SK-N-SH (cell line): ENCODE measurements at regions of chr19 and their contacts with region 1.

Region 1: DNA sequence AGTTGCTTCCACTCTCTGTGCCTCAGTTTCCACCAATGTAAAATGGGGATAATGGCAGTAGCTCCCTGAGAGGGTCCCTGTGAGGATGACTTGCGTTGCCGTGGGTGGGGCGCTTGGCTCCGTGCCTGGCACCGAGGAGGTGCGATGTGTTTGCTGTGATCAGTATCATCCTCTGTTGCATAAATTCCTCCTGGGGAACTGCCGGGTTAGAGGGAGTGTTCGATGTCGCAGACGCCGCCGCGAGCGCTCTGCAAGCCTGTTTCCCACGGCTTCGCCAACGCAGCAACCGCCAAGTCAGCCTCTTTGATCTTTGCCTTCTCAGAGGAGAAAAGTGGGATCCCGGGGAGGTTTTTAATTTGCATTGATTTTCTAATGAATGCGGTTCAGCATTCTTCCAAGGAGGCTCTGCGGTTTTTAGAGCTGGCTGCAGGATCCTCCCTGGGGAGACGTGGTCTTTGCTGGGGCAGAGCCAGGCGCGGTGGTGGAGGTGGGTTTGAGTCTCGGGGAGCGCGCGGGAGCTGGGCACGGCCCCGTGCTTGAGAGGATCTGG is 7.6 kb downstream of the GPR32 start:
- DNase-seq: peak; percentile 54
- H3K4me3 ChIP-seq: no peak overlapping the region
- H3K27ac ChIP-seq: no peak overlapping the region
- H3K4me1 ChIP-seq: no peaks in the 10 kb centered on the region
- H3K27me3 ChIP-seq: peaks cover 60% of the 10 kb centered on the region
- CTCF ChIP-seq: no peak
- EP300 ChIP-seq: no peak
- RAD21 ChIP-seq: no peak

Region 2: GRCh38 chr19:50556282-50557008 is 221.4 kb before region 1 on chr19:
- CTCF ChIA-PET with region 1: interaction called, 11 read pairs
- POLR2A ChIA-PET with region 1: interaction called, 3 read pairs
- DNase-seq: peak; percentile 96
- H3K4me3 ChIP-seq: peak overlapping the region; percentile 56 to 60
- H3K27ac ChIP-seq: peak overlapping the region in 1 of 2 experiments; percentile 59; a peak in 1 of 4 replicates
- H3K4me1 ChIP-seq: peaks cover 0 to 20% of the 10 kb centered on the region in 2 experiments; a peak in 1 of 4 replicates
- H3K27me3 ChIP-seq: no peaks in the 10 kb centered on the region
- CTCF ChIP-seq: peak; percentile 98
- EP300 ChIP-seq: no peak
- RAD21 ChIP-seq: peak; percentile 44

Region 3: GRCh38 chr19:50669302-50670101 is 108.3 kb before region 1 on chr19:
- CTCF ChIA-PET with region 1: interaction called, 44 read pairs
- POLR2A ChIA-PET with region 1: no interaction called
- DNase-seq: peak; percentile 78
- H3K4me3 ChIP-seq: no peak overlapping the region
- H3K27ac ChIP-seq: no peak overlapping the region
- H3K4me1 ChIP-seq: no peaks in the 10 kb centered on the region
- H3K27me3 ChIP-seq: no peaks in the 10 kb centered on the region
- CTCF ChIP-seq: peak; percentile 87
- EP300 ChIP-seq: no peak
- RAD21 ChIP-seq: peak; percentile 60

Region 4: DNA sequence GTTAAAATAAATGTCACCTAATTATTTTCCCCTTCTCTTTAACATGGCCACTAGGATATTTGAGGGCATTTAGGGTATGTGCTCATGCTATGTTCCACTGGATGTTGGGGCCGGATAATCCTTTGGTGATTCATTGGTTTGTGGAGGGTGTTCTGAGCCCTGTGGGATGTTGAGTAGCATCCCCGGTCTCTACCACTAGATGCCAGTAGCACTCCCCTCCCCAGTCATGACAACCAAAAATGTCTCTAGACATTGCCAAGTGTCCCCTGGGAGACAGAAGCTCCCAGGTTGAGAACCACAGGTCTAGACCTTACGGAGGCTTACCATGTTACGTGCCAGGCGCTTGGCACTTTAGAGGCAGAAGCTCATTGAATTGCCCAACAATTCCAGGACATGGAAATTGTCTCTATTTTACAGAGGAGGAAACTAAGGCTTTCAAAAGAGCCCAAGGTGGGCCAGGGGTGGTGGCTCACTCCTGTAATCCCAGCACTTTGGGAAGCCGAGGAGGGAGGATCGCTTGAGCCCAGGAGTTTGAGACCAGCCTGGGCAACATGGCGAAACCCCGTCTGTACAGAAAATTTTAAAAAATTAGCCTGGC is 72.3 kb before region 1 on chr19:
- CTCF ChIA-PET with region 1: interaction called, 87 read pairs
- POLR2A ChIA-PET with region 1: no interaction called
- DNase-seq: peak; percentile 87
- H3K4me3 ChIP-seq: no peak overlapping the region; a peak in 1 of 4 replicates
- H3K27ac ChIP-seq: no peak overlapping the region
- H3K4me1 ChIP-seq: no peaks in the 10 kb centered on the region
- H3K27me3 ChIP-seq: no peaks in the 10 kb centered on the region
- CTCF ChIP-seq: peak; percentile 75
- EP300 ChIP-seq: no peak
- RAD21 ChIP-seq: peak; percentile 75

Region 5: DNA sequence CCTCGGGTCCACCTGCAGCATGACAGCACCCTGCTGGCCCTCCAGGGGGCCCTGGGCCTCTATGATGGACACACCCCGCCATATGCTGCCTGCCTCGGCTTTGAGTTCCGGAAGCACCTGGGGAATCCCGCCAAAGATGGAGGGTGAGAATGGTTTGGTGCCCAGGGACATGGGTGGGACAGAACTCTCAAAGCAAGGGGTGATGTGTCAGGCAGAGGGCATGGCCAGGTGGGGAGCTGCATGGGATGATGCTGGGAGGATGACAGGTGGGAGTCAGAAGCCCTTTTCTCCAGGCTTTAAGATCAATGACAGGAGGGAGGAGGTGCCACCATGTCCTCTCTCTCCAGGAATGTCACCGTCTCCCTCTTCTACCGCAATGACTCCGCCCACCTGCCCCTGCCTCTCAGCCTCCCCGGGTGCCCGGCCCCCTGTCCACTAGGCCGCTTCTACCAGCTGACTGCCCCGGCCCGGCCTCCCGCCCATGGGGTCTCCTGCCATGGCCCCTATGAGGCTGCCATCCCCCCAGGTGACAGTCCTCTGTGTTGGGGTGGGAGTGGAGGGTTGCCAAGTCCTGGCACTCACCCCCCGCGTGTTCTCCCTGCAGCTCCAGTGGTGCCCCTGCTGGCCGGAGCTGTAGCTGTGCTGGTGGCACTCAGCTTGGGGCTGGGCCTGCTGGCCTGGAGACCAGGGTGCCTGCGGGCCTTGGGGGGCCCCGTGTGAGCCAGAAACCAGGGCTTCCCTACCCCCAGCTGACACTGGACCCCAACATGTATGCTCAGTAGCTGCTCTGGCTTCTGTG is 16.8 kb after region 1 on chr19:
- CTCF ChIA-PET with region 1: interaction called, 27 read pairs
- POLR2A ChIA-PET with region 1: no interaction called
- DNase-seq: peak; percentile 70
- H3K4me3 ChIP-seq: no peak overlapping the region
- H3K27ac ChIP-seq: no peak overlapping the region
- H3K4me1 ChIP-seq: no peaks in the 10 kb centered on the region; a peak in 1 of 4 replicates
- H3K27me3 ChIP-seq: no peaks in the 10 kb centered on the region
- CTCF ChIP-seq: peak; percentile 23; the same call in 1 of the 2 replicates
- EP300 ChIP-seq: no peak
- RAD21 ChIP-seq: no peak; the same call in 1 of the 2 replicates